SK-N-SH (cell line): ENCODE measurements at regions of chr22 and their contacts with region 1.

Region 1: GRCh38 chr22:36470162-36470993 is 11.1 kb downstream of the TXN2 start:
- DNase-seq: peak; percentile 82
- H3K4me3 ChIP-seq: no peak overlapping the region
- H3K27ac ChIP-seq: peak overlapping the region in 1 of 2 experiments; percentile 100; a peak in 2 of 4 replicates
- H3K4me1 ChIP-seq: peaks cover 3 to 45% of the 10 kb centered on the region in 2 experiments; a peak in 3 of 4 replicates
- H3K27me3 ChIP-seq: no peaks in the 10 kb centered on the region
- CTCF ChIP-seq: peak; percentile 94
- EP300 ChIP-seq: no peak
- RAD21 ChIP-seq: peak; percentile 93

Region 2: DNA sequence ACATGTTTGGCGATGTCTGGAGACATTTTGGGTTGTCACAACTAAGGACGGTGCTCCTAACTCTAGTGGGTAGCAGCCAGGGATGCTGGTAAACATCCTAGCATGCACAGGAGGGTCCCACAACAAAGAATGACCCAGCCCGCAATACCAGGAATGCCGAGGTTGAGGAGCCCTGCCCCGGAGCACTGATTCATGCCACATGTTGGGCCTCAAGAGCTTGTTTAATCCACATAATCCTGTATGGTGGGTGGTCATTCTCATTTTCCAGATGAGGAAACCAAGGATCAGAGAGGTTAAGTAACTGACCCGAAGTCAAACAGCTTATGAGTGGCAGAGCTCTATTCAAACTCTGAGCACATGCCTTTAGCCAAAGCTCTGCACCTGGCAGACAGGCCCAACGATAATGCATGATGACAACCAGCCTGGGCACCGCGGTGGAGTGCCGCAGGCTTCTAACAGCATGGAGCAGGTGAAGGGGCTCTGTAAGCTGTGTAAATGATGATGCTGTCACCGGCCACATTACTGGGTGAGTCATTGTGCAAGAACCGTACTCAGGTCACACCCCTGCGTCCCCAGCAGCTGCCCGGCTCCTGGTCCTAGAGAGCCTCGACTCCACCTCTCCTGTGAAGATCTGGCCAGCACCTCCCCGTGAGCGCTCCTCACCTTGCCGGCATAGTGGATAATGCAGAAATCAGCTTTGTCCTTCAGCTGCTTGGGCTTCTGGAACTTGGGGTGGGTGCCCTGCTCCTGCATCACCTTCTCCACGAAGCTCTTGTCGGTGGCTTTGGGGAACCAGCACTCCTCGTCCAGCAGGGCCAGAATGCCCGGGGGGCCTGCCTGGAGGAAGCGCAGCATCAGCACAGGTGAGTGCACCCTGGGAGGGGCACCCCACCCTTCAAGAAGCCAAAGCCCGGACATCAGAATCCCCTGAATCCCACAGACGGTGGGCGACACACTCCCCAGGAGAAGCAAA is 158.7 kb before region 1 on chr22:
- CTCF ChIA-PET with region 1: interaction called, 20 read pairs
- POLR2A ChIA-PET with region 1: no interaction called
- DNase-seq: no peak
- H3K4me3 ChIP-seq: no peak overlapping the region
- H3K27ac ChIP-seq: peak overlapping the region in 1 of 2 experiments; percentile 33; a peak in 1 of 4 replicates
- H3K4me1 ChIP-seq: no peaks in the 10 kb centered on the region
- H3K27me3 ChIP-seq: no peaks in the 10 kb centered on the region
- CTCF ChIP-seq: no peak
- EP300 ChIP-seq: no peak
- RAD21 ChIP-seq: no peak

Region 3: GRCh38 chr22:36323182-36323854 is 147.1 kb before region 1 on chr22:
- CTCF ChIA-PET with region 1: interaction called, 14 read pairs
- POLR2A ChIA-PET with region 1: no interaction called
- DNase-seq: no peak
- H3K4me3 ChIP-seq: no peak overlapping the region
- H3K27ac ChIP-seq: peak overlapping the region in 1 of 2 experiments; percentile 98; a peak in 2 of 4 replicates
- H3K4me1 ChIP-seq: peaks cover 6 to 45% of the 10 kb centered on the region in 2 experiments; a peak in 3 of 4 replicates
- H3K27me3 ChIP-seq: no peaks in the 10 kb centered on the region
- CTCF ChIP-seq: no peak
- EP300 ChIP-seq: no peak
- RAD21 ChIP-seq: no peak

Region 4: DNA sequence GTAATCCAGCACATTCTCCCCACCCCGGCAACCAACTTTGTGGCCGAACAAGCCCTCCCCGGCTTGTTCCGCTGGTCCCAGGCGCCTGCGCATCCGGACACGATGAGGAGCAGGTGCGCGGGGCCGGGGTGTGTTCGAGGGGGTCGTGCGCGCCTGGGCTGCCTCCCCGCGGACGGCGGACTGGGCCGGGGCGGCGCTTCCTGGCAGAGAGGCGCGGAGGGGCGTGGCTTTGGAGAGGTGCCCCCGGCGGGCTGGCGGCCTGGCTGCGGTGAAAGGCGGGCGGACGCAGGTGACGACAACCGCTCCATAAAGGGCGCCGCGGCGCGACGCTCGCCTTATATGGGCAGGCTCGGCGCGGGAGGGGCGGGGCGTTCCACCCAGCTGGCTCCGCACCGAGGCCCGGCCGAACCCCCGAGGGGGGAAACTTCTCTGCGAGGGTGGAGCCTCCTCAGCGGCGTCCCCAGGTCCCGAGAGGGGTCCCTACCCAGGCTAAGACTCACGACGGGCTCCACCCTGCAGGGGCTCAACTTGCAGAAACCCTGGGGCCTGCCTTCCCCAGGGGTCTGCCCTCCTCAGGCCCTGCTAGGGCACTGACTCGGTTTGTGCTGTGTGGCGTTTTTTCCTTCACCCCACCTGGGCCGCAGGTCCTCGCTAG is 15.3 kb before region 1 on chr22:
- CTCF ChIA-PET with region 1: interaction called, 17 read pairs
- POLR2A ChIA-PET with region 1: interaction called, 4 read pairs
- DNase-seq: peak; percentile 96
- H3K4me3 ChIP-seq: peak overlapping the region; percentile 37 to 44; a peak in 3 of 4 replicates
- H3K27ac ChIP-seq: peak overlapping the region in 1 of 2 experiments; percentile 39; a peak in 1 of 4 replicates
- H3K4me1 ChIP-seq: peaks cover 0 to 8% of the 10 kb centered on the region in 2 experiments; a peak in 1 of 4 replicates
- H3K27me3 ChIP-seq: no peaks in the 10 kb centered on the region
- CTCF ChIP-seq: no peak
- EP300 ChIP-seq: no peak
- RAD21 ChIP-seq: peak; percentile 36

Region 5: DNA sequence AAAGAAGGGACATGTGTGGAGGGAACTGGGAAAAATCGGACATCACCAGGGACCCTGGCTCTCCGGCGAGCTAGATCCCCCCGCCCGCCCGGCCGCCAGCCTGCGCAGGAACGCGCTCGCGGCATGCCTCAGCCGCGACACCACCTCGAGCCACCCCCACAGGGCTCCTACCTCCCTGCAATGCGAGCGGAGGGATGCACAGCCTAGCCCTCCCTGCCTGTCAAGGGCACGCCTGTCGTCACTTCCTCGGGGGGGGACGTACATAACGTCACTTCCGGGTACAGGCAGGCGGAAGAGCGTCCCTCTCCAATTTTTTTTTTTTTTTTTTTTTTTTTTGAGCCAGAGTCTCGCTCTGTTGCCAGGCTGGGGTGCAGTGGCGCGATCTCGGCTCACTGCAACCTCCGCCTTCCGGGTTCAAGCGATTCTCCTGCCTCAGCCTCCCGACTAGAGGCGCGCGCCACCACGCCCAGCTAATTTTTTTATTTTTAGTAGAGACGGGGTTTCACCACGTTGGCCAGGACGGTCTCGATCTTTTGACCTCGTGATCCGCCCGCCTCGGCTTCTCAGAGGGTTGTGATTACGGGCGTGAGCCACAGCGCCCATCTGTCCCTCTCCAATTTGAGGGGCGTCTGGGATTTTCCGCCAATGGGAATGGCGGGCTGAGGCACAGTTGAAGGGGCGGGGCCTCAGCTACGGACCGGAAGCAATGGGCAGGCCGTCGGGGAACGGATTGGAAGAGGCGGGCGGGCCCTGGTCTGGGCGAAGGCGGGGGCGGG is 11.2 kb after region 1 on chr22 and contains the start of gene TXN2:
- CTCF ChIA-PET with region 1: interaction called, 32 read pairs
- POLR2A ChIA-PET with region 1: interaction called, 3 read pairs
- DNase-seq: peak; percentile 97
- H3K4me3 ChIP-seq: peak within 1 kb of the TSS; percentile 70 to 99
- H3K27ac ChIP-seq: peak within 1 kb of the TSS; percentile 91 to 100
- H3K4me1 ChIP-seq: peaks cover 5 to 10% of the 10 kb centered on the region in 2 experiments
- H3K27me3 ChIP-seq: no peaks in the 10 kb centered on the region
- CTCF ChIP-seq: no peak
- EP300 ChIP-seq: no peak
- RAD21 ChIP-seq: no peak
- polyA plus RNA-seq, gene TXN2: 251 and 284 TPM in 2 replicates

Region 6: GRCh38 chr22:36493690-36494110 is 23.3 kb after region 1 on chr22:
- CTCF ChIA-PET with region 1: interaction called, 11 read pairs
- POLR2A ChIA-PET with region 1: no interaction called
- DNase-seq: no peak
- H3K4me3 ChIP-seq: no peak overlapping the region
- H3K27ac ChIP-seq: no peak overlapping the region
- H3K4me1 ChIP-seq: no peaks in the 10 kb centered on the region
- H3K27me3 ChIP-seq: no peaks in the 10 kb centered on the region
- CTCF ChIP-seq: no peak
- EP300 ChIP-seq: no peak
- RAD21 ChIP-seq: no peak

Region 7: DNA sequence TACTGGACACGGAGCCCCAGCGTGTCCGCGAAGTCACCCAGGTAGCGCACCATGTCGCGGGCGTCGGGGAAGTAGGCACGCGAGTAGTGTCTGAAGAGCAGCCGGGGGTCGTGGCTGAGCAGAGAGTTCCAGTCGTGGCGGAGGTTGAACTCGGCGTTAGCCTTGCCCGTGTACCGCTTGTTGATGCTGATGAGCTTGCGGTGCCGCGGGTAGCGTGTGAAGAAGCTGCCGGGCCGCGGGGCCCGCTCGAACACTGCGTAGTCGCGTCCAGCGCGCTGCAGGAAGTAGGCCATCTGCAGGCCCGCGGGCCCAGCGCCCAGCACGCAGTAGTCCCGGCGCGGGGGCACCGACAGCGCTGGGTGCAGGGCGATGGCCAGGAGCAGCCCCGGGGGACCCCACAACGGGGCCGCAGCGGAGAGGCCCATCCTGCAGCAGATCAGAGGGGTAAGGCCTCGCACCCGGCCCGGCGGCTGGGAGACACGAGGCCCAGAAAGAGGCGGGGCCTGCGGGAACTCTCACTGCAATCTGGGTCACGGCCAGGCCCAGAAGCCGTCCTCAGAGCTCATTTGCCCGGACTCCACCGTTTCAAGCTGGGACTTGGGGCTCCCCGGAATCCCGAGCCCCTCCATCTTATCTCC is 35.7 kb after region 1 on chr22:
- CTCF ChIA-PET with region 1: no interaction called
- POLR2A ChIA-PET with region 1: no interaction called
- DNase-seq: no peak
- H3K4me3 ChIP-seq: peak overlapping the region; percentile 51 to 58
- H3K27ac ChIP-seq: peak overlapping the region in 1 of 2 experiments; percentile 80; a peak in 2 of 4 replicates
- H3K4me1 ChIP-seq: peaks cover 0 to 18% of the 10 kb centered on the region in 2 experiments; a peak in 2 of 4 replicates
- H3K27me3 ChIP-seq: no peaks in the 10 kb centered on the region
- CTCF ChIP-seq: no peak
- EP300 ChIP-seq: no peak
- RAD21 ChIP-seq: no peak